Dendritic cell treated with granulocyte-macrophage colony-stimulating factor and Interleukin-4, amounts not matched to agents 40 ng/mL and 50 ng/mL, for 4 days (primary cell): ENCODE measurements at regions of chr22 and their contacts with region 1.

Region 1: DNA sequence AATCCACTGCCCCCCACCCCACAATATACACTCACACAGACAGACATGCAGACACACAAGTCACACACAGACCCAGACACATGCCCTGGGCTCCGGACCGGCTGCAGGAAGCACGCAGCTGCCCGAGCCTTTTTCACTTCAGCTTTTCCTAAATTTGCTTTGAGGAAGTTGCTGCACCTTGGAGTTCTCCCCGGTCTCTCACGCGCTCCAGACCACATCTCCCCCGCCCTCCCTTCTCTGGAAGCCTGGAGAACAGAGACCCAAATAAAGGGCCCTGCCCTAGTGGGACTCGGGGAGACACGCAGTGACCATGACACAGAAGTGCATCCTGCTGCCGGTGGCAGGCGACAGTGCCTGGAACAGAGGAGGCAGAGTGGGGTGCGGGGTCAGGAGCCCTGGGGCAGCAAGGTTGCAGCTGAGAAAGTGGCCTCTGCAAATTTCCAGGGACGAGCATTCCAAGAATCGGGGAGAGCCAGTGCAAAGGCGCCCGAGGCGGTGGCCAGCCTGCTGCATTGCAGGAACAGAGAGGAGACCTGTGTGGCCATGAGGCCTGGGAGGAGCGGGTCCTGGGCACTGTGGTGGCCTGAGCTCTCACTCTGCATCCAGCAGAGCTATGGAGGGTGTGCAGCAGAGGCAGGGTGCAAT is 19.1 kb downstream of the RPL3 start:
- H3K4me3 Mint-ChIP-seq: peak overlapping the region; percentile 57
- H3K27ac Mint-ChIP-seq: peak overlapping the region; percentile 91
- H3K4me1 Mint-ChIP-seq: peaks cover 69% of the 10 kb centered on the region
- H3K27me3 Mint-ChIP-seq: peaks cover 5% of the 10 kb centered on the region

Region 2: DNA sequence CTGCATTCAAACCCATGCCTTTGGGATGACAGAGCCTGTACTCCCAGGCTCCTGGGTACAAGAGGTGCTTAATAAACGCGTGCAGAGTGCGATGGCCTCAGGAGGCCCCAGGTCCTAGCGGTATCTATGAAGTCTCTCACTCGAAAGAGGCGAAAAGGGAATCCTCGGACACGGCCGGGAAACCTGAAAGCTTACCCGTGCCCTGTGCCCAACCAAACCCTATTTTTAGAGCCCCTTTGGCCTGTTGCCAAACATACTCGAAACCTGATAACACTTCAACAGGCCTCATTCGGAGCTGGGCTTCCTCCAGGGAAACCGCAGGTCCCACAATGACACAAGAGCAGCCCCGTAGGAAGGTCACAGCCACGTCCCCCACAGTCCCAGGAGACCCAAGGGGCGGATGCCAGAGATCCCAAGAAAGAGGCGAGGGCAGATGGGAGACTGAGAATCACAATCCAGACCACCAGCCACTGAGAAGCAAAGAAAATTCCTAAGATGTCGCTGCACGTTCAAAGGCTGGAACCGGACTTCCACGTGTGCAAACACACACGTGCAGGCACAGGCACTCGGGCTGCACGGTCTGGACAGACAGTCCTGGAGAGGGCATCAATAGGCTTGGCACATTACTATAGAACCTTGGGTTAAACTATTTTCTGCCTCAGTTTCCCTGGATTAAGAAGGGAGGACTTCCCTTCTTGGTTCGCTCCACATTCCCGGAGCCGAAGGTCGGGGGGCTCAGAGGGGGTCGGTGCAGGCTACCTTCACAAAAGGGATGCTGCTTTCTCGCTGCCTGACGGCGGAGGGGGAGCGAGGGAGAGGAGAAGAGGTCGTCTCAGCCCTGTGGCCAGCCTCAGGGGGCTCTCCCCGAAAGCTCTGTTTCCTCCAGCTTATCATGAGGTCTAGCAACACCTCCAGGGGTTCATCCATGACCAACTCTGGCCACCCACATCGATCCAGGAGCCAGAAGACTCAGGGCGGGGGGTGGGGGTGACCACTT is 63.7 kb before region 1 on chr22:
- intact Hi-C with region 1: loop called (anchors 5 kb)
- H3K4me3 Mint-ChIP-seq: peak overlapping the region; percentile 42
- H3K27ac Mint-ChIP-seq: no peak overlapping the region
- H3K4me1 Mint-ChIP-seq: peaks cover 89% of the 10 kb centered on the region
- H3K27me3 Mint-ChIP-seq: peaks cover 96% of the 10 kb centered on the region

Region 3: DNA sequence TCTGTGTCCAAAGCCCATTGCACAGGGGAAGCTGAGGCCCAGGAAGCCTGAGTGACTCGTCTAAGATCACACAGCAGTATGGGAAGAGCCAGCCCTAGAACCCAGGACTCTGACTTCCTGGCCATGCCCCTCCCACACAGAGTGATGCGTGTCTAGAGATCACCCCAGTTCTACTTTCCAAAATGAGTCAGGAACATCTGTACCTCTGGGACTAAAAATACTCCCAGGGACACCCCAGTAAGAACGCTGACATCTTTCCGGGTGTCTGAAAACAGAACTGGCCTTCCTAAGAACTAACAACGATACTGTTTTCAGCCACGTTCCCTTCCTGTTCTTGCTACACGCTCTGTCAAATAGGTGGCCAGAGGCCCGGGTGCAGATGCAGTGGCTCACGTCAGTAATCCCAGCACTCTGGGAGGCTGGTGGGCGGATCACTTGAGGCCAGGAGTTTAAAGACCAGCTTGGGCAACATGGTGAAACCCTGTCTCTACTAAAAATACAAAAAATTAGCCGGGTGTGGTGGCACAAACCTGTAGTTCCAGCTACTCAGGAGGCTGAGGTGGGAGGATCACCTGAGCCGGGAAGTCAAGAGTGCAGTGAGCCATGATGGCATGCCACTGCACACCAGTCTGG is 33.8 kb before region 1 on chr22:
- intact Hi-C with region 1: loop called (anchors 1 kb)
- H3K4me3 Mint-ChIP-seq: no peak overlapping the region
- H3K27ac Mint-ChIP-seq: peak overlapping the region; percentile 95
- H3K4me1 Mint-ChIP-seq: peaks cover 81% of the 10 kb centered on the region
- H3K27me3 Mint-ChIP-seq: peaks cover 2% of the 10 kb centered on the region

Region 4: DNA sequence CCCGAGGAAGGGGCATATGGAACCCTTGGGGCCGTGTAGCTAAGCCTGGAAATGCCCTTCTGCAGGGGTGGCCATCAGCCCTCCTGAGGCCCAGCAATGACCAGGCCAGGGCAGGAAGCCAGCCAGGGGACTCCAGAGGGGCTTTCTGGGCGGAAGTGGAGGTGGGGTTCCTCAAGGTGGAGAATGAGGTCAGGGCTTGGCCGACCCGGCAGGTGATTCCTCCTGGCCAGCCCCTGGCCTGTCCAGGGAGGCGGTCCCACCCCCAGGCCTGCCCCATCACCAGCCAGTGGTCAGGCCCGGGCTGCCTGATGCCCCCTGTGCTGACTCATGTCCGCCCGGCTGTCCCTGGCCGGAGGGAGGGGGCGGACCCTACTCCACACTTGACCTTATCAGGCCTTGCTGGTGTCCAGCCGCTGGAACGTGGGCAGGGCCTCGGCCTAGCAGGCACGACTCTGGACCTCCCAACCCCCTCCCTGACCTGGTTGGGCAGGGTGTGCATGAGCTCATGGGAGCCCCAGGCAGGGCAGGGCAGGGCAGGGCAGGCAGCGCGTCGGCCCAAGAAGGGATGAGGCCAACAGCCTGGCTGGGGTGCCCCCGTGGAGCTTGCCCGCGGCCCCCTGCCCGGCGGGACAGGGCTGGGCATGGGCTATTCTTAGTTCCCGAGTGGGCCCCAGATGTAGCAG is 16.8 kb before region 1 on chr22:
- intact Hi-C with region 1: loop called (anchors 2 kb)
- H3K4me3 Mint-ChIP-seq: peak overlapping the region; percentile 20
- H3K27ac Mint-ChIP-seq: peak overlapping the region; percentile 90
- H3K4me1 Mint-ChIP-seq: peaks cover 88% of the 10 kb centered on the region
- H3K27me3 Mint-ChIP-seq: peaks cover 8% of the 10 kb centered on the region